Mucosa of descending colon (tissue), 3 donors: ENCODE measurements at regions of chr2 and their contacts with region 1.

Region 1: DNA sequence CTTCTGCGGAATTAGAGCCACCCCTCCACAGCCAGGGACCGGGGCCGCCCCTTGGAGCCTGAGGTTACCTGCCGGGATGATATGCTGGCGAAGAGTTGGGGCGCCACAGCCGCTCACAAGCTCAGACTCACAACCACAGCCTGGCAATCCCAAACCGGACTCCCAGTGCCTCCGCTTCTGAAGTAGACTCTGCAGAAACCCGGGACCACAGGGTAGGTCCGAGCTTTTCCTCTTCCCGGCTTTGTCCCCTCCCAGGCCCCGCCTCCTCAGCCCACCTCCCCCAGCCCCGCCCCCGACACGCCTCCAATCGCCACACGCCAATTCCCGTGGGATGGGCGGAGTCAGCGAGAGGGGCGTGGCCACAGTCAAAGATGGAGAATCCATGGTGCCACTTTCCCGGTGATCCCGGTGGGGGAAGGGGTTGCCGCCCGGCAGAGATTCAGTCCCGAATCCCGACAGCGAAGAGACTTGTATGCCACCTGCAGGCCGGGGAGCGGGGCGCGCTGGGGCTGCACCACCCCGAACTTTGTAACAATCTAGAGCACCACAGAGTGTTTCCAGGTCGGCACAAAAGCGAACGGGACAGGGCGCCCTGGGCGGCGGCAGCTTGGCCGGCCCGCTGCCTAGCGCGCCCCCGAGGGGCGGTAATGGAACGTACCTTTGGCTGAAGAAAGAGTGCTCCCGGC is at the start of gene IDH1:
- DNase-seq: peak; percentile 96 to 100 (median 100)
- ATAC-seq: peak; percentile 96
- H3K4me3 ChIP-seq: peak within 1 kb of the TSS; percentile 44
- H3K4me1 ChIP-seq: peaks cover 19% of the 10 kb centered on the region
- CTCF ChIP-seq: peak; percentile 49
- total RNA-seq, gene IDH1: 105 to 233 (median 227) TPM

Region 2: DNA sequence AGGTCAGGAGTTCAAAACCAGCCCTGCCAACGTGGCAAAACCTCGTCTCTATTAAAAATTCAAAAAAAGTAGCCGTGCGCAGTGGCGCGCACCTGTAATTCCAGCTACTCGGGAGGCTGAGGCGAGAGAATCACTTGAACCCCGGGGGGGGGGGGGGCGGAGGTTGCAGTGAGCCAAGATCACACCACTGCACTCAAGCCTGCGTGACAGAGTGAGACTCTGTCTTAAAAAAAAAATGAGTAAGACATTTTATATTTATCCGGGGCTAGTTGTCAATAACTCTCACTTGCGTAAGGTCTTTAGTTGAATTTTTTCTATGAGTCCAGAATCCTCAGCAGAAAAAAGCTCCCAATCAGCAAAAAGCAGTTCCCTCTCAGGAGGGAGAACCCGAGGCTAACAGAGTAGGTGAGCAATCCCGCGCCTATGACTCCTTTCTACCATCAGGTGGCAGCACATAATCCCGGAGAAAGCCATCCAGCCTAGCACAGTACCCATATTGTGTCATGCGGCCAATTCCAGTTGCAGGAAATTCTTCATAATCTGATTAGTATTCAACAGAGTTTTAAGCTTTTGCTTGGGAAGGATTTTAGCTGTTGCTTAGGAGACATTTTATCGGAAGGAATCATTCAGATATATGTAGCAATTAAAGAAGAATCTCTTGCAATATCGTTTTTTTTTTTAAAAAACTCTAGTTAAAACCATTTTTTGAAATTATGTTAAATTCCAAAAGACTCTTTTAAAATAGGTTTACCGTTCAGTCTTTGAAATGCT is 79.8 kb before region 1 on chr2:
- intact Hi-C with region 1: loop called in 1 of 2 experiments (anchors 10 kb)
- DNase-seq: peak in 2 of 3 donors; percentile 68 to 89
- ATAC-seq: peak; percentile 99
- H3K4me3 ChIP-seq: no peak overlapping the region
- H3K4me1 ChIP-seq: no peaks in the 10 kb centered on the region
- CTCF ChIP-seq: peak; percentile 84

Region 3: GRCh38 chr2:208269091-208269490 is 14.1 kb after region 1 on chr2:
- intact Hi-C with region 1: no loop called
- DNase-seq: no peak
- ATAC-seq: no peak
- H3K4me3 ChIP-seq: no peak overlapping the region
- H3K4me1 ChIP-seq: peaks cover 16% of the 10 kb centered on the region
- CTCF ChIP-seq: no peak